Activated CD4-positive, alpha-beta memory T cell treated with anti-CD3 and anti-CD28 coated beads for 36 hours (primary cell): ENCODE measurements at regions of chr12 and their contacts with region 1.

Region 1: DNA sequence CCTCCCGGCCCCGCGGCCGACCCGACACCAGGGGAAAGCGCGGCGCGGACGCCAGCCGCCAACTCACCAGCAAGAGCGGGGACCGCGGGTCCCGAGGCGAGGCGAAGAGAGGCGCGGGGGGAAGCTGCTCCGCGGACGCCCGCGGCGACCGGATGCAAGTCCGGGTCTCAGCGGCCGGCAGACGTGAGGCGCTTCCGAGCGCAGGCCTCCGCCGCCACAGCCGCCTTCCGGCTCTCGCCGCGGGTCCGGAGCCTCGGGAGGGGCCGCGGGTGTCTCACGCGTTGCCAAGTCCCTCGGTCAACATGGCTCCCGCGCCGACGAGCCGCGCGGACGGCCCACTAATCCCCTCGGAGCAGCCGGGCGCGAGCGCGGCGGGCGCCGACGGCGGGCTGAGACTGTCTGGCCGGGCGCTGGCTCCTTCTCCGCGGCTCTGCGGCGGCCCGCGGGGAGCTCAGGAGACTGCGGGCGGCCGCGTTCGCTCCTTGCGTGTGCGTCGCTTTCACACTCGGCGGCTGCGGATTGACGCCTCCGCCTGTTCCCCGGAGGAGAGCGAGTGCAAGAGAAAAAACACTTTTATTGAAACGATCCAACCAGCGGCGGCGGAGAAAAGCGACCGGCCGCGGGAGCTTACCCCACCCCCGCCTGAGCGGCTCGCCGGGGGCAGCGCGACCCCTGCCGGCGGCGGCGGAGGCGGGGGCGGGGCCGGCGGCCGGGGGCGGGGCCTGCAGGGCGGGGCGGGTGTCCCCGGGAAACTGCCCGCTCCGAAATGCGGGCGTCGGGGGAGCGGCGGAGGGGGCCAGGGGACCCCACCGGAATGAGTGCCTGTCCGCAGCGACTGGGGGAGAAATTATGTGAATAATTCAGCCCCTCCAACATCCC is at the start of gene CDK17:
- DNase-seq: peak; percentile 92
- H3K4me3 Mint-ChIP-seq: peak within 1 kb of the TSS; percentile 86
- H3K27ac Mint-ChIP-seq: peak within 1 kb of the TSS; percentile 97
- H3K4me1 Mint-ChIP-seq: peaks cover 39% of the 10 kb centered on the region
- H3K27me3 Mint-ChIP-seq: no peaks in the 10 kb centered on the region
- total RNA-seq, gene CDK17: 34.5 to 35.7 TPM

Region 2: GRCh38 chr12:96047229-96048211 is 352.6 kb before region 1 on chr12:
- CTCF ChIA-PET with region 1: no interaction called
- POLR2A ChIA-PET with region 1: interaction called, 3 read pairs
- intact Hi-C with region 1: loop called (anchors 1 kb)
- DNase-seq: peak; percentile 36
- H3K4me3 Mint-ChIP-seq: peak overlapping the region; percentile 31
- H3K27ac Mint-ChIP-seq: peak overlapping the region; percentile 92
- H3K4me1 Mint-ChIP-seq: peaks cover 53% of the 10 kb centered on the region
- H3K27me3 Mint-ChIP-seq: no peaks in the 10 kb centered on the region

Region 3: DNA sequence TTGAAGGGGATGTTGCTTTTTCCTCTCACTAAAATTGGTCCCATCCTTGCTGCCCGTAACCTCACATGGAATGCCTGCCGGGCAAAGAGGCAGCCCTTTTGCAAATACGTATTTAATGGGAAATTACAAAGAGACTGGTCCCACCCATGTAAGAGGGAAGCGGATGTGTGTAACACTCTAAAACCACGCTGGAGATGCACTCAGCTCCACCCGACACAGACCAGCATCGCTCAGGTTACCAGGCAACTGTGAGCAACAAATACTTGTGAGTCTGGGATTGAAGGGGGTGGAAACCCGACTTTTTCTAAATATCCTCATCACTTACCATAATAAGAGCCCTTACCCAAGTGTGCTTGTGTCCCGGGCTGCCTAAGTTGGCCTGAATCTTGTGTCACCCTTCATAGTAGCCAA is 158.3 kb before region 1 on chr12:
- CTCF ChIA-PET with region 1: interaction called, 5 read pairs
- POLR2A ChIA-PET with region 1: interaction called, 4 read pairs
- intact Hi-C with region 1: loop called (anchors 1 kb)
- DNase-seq: peak; percentile 80
- H3K4me3 Mint-ChIP-seq: peak overlapping the region; percentile 18
- H3K27ac Mint-ChIP-seq: peak overlapping the region; percentile 29
- H3K4me1 Mint-ChIP-seq: peaks cover 59% of the 10 kb centered on the region
- H3K27me3 Mint-ChIP-seq: no peaks in the 10 kb centered on the region

Region 4: GRCh38 chr12:96335270-96335669 is 64.9 kb before region 1 on chr12:
- CTCF ChIA-PET with region 1: interaction called, 10 read pairs
- POLR2A ChIA-PET with region 1: interaction called, 3 read pairs
- intact Hi-C with region 1: no loop called
- DNase-seq: no peak
- H3K4me3 Mint-ChIP-seq: no peak overlapping the region
- H3K27ac Mint-ChIP-seq: peak overlapping the region; percentile 54
- H3K4me1 Mint-ChIP-seq: peaks cover 41% of the 10 kb centered on the region
- H3K27me3 Mint-ChIP-seq: no peaks in the 10 kb centered on the region

Region 5: DNA sequence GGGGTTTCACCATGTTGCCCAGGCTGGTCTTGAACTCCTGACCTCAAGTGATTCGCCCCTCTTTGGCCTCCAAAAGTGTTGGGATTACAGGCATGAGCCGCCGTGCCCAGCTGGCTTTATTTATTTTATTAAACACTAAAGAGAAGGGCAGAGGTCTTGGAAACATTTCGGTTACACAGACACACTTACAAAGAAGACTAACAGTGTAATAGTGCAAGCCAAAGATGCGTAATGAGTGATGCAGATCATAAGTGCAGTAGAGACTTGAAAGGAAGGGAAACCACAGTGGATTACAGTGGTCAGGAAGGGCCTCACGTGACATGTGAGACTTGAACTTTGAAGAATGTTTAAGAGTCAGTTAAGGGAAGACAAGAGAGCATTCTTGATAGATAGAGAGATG is 33.9 kb after region 1 on chr12:
- CTCF ChIA-PET with region 1: interaction called, 9 read pairs
- POLR2A ChIA-PET with region 1: interaction called, 3 read pairs
- intact Hi-C with region 1: loop called (anchors 1 kb)
- DNase-seq: peak; percentile 88
- H3K4me3 Mint-ChIP-seq: peak overlapping the region; percentile 4
- H3K27ac Mint-ChIP-seq: peak overlapping the region; percentile 68
- H3K4me1 Mint-ChIP-seq: peaks cover 31% of the 10 kb centered on the region
- H3K27me3 Mint-ChIP-seq: no peaks in the 10 kb centered on the region

Region 6: DNA sequence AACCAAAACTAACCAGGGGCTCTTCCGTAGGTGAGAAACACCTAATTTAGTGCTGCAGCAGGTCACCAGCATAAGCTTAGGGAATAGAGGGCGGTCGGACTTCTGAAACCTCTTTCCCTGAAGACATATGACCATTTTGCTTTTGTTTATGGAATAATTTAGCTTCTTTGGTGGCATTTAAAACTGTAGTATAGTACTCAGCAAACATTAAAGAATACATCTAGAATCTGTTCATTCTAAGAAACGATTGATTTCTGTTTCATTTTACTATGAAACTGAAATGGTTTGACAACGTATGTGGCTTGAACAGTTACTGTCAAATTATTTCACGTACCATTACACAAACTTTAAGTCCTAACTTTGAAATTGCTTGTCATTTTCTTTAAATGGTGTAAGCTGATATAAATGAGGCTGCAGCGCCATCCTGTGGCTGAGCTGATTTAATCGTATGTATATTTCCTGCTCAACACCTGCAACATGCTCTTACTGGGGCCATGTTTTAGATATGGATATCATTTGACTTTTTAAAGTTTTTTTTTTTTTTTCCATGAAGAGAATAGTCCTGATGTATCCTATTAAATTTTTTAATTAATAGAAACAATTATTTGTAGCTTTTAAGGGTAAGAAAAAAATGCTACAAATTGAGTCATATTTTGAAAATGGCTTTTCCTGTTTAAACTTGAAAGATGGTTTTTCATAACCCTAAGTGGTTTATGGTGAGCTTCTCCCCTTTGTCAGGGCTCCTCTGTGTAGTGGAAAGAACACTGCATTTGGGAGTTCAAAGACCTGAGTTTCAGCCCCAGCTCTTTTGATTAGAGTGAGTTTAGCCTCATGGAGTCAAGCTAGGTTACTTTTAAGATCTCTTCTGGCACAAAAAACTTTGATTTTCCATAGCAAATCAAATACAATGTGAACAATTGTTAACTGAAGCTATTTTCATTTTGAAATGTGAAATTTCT is 116.6 kb after region 1 on chr12:
- CTCF ChIA-PET with region 1: interaction called, 42 read pairs
- POLR2A ChIA-PET with region 1: interaction called, 18 read pairs
- intact Hi-C with region 1: loop called (anchors 1 kb)
- DNase-seq: peak; percentile 92
- H3K4me3 Mint-ChIP-seq: no peak overlapping the region
- H3K27ac Mint-ChIP-seq: peak overlapping the region; percentile 44
- H3K4me1 Mint-ChIP-seq: peaks cover 15% of the 10 kb centered on the region
- H3K27me3 Mint-ChIP-seq: no peaks in the 10 kb centered on the region